K562 (cell line): ENCODE measurements at regions of chr3 and their contacts with region 1.

Region 1: DNA sequence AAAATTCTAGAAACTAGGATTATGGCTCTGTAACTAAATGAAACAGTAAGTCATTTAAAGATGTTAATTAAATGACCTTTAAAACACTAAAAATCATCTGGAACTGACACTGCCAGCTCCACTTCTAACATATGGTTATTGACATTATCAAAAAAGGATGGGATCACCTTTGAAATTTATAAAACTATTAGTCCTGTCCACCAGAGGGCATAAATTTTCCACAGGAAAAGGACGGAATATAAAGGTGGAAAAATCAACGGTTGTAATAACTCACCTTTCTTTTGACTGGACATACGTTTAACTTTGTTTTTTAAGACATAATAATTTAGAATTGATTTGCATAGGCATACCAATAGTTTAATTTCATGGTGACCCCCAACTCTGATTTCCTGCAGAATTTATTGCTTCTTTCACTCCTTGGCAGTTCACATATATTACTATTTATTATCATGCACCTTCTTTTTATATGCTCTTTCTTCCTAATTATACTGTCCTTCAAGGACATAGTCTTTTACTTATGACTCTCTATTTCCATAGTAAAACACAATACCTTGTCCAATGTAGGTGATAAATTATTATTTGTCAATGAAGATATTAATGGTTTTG is 345.7 kb downstream of the CADM2 start:
- DNase-seq: peak in 3 of 4 experiments; percentile 2 to 5 (median 4)
- ATAC-seq: no peak
- H3K4me3 ChIP-seq: no peak overlapping the region
- H3K27ac ChIP-seq: no peak overlapping the region
- H3K4me1 ChIP-seq: no peaks in the 10 kb centered on the region
- H3K27me3 ChIP-seq: no peaks in the 10 kb centered on the region
- CTCF ChIP-seq: peak in 1 of 3 experiments; percentile 27; a peak in 1 of 6 replicates
- EP300 ChIP-seq: no peak
- POLR2A ChIP-seq: no peak
- RAD21 ChIP-seq: no peak

Region 2: GRCh38 chr3:84275532-84275931 is 1028.9 kb before region 1 on chr3:
- CTCF ChIA-PET with region 1: no interaction called
- POLR2A ChIA-PET with region 1: no interaction called
- in situ Hi-C with region 1: no loop called
- intact Hi-C with region 1: no loop called
- DNase-seq: no peak
- ATAC-seq: no peak
- H3K4me3 ChIP-seq: no peak overlapping the region
- H3K27ac ChIP-seq: no peak overlapping the region
- H3K4me1 ChIP-seq: no peaks in the 10 kb centered on the region
- H3K27me3 ChIP-seq: no peaks in the 10 kb centered on the region
- CTCF ChIP-seq: no peak
- EP300 ChIP-seq: no peak
- POLR2A ChIP-seq: no peak
- RAD21 ChIP-seq: no peak

Region 3: DNA sequence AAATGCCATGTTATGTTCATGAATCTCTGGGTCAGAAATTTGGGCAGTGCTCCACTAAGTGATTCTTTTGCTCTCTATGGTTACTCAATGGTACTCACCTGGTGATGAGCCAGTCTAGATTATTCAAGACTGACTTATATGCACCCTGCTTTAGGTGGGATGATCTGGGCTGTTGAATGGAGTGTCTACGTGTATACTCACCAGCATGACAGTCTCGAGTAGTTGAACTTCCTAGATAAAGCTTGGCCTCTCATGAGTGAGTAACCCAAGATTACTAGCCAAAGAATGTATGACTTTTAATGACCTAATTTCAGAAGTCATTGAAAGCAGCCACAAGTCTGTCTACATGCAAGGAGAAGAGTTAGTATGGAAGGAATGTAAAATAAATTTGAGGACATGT is 423.2 kb before region 1 on chr3:
- CTCF ChIA-PET with region 1: no interaction called
- POLR2A ChIA-PET with region 1: no interaction called
- in situ Hi-C with region 1: no loop called
- intact Hi-C with region 1: no loop called
- DNase-seq: no peak
- ATAC-seq: no peak
- H3K4me3 ChIP-seq: no peak overlapping the region
- H3K27ac ChIP-seq: no peak overlapping the region
- H3K4me1 ChIP-seq: no peaks in the 10 kb centered on the region
- H3K27me3 ChIP-seq: no peaks in the 10 kb centered on the region
- CTCF ChIP-seq: no peak
- EP300 ChIP-seq: no peak
- POLR2A ChIP-seq: no peak
- RAD21 ChIP-seq: no peak

Region 4: GRCh38 chr3:85567071-85567676 is 262.7 kb after region 1 on chr3:
- CTCF ChIA-PET with region 1: interaction called, 3 read pairs
- POLR2A ChIA-PET with region 1: no interaction called
- in situ Hi-C with region 1: loop called (anchors 25 kb)
- intact Hi-C with region 1: no loop called
- DNase-seq: peak; percentile 27 to 69 (median 35)
- ATAC-seq: peak; percentile 85
- H3K4me3 ChIP-seq: no peak overlapping the region
- H3K27ac ChIP-seq: no peak overlapping the region
- H3K4me1 ChIP-seq: no peaks in the 10 kb centered on the region
- H3K27me3 ChIP-seq: no peaks in the 10 kb centered on the region
- CTCF ChIP-seq: peak; percentile 55 to 67 (median 62)
- EP300 ChIP-seq: no peak
- POLR2A ChIP-seq: no peak
- RAD21 ChIP-seq: peak; percentile 44 to 67

Region 5: GRCh38 chr3:85576091-85576690 is 271.7 kb after region 1 on chr3:
- CTCF ChIA-PET with region 1: interaction called, 3 read pairs
- POLR2A ChIA-PET with region 1: no interaction called
- in situ Hi-C with region 1: loop called (anchors 25 kb)
- intact Hi-C with region 1: loop called (anchors 5 kb)
- DNase-seq: peak; percentile 25 to 72 (median 38)
- ATAC-seq: no peak; the same call in 2 of the 3 replicates
- H3K4me3 ChIP-seq: no peak overlapping the region
- H3K27ac ChIP-seq: no peak overlapping the region
- H3K4me1 ChIP-seq: no peaks in the 10 kb centered on the region
- H3K27me3 ChIP-seq: no peaks in the 10 kb centered on the region
- CTCF ChIP-seq: peak; percentile 41 to 71 (median 62); a peak in 5 of 6 replicates
- EP300 ChIP-seq: no peak
- POLR2A ChIP-seq: no peak
- RAD21 ChIP-seq: peak; percentile 69 to 74